ENCODE measurements at regions of chr3 and their contacts with region 1.

Region 1: GRCh38 chr3:47143068-47143467 is 20.8 kb downstream of the SETD2 start:
- DNase-seq: no peak
- H3K4me3 ChIP-seq: no peak overlapping the region
- H3K27ac ChIP-seq: no peak overlapping the region
- H3K4me1 ChIP-seq: peaks cover 35% of the 10 kb centered on the region
- CTCF ChIP-seq: no peak

Region 2: DNA sequence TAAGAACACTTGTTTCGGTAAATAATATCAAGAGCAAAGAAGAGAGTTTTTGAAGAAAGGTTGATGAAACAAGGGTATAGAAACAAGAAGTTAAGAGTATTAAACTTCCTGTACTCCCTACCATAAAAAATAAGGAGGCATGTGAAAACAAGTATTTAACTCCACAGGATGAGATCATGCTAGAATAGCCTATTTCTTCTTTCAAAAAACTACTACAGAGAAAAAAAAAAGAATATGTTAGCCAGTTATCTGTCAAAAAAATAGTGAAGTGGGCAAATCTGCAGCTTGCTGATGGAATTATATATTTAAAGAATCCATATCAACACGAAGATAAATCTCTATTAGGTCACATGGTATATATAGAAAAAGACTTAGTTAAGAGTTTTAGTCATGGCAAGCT is 12.5 kb before region 1 on chr3:
- CTCF ChIA-PET with region 1: no interaction called
- POLR2A ChIA-PET with region 1: interaction called, 12 read pairs
- intact Hi-C with region 1: no loop called
- DNase-seq: no peak
- H3K4me3 ChIP-seq: no peak overlapping the region
- H3K27ac ChIP-seq: no peak overlapping the region
- H3K4me1 ChIP-seq: peaks cover 15% of the 10 kb centered on the region
- CTCF ChIP-seq: no peak

Measured in OCI-LY7 (cell line).